ENCODE measurements at regions of chr16 and their contacts with region 1.

Region 1: DNA sequence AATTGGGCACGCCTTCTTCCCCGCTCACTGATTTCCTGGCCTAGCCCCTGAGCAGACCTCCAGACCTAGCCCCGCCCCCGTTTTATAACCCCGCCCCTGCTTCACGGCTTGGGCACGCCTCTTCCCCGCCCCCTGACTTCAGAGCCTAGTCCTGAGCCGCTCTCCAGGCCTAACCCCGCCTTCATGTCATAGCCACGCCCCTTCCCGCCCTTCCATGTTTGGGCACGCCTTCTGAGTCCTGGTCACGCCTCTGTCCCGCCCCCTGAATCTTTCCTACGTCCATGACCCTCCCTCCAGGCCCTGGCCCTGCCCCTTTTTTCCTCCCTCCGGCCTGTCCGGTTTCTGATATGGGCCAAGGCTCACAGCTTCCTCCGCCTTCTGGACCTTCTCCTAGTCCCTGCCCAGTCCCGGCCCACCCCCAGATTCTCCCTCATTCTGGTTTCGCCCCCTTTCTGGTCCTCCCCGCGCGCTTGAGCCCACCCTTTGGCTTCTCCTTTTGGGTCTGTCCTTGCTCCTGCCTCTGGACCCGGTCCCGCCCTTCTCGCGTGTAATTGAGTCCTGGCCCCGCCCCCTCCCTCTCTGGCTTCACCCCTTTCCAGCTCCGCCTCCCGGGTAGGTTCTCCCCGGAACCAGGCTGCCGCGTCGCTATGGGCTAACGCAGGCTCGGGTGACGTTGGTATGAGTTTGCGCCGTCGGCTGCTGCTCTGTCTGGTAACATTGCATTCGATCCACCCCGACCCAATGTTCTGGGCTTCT is 15.1 kb upstream of the EEF2K start:
- DNase-seq: peak; percentile 99 to 100
- H3K4me3 ChIP-seq: peak overlapping the region; percentile 58 to 64
- H3K27ac ChIP-seq: peak overlapping the region; percentile 95 to 98
- H3K4me1 ChIP-seq: peaks cover 9 to 20% of the 10 kb centered on the region in 2 donors
- H3K27me3 ChIP-seq: no peaks in the 10 kb centered on the region
- CTCF ChIP-seq: no peak

Region 2: DNA sequence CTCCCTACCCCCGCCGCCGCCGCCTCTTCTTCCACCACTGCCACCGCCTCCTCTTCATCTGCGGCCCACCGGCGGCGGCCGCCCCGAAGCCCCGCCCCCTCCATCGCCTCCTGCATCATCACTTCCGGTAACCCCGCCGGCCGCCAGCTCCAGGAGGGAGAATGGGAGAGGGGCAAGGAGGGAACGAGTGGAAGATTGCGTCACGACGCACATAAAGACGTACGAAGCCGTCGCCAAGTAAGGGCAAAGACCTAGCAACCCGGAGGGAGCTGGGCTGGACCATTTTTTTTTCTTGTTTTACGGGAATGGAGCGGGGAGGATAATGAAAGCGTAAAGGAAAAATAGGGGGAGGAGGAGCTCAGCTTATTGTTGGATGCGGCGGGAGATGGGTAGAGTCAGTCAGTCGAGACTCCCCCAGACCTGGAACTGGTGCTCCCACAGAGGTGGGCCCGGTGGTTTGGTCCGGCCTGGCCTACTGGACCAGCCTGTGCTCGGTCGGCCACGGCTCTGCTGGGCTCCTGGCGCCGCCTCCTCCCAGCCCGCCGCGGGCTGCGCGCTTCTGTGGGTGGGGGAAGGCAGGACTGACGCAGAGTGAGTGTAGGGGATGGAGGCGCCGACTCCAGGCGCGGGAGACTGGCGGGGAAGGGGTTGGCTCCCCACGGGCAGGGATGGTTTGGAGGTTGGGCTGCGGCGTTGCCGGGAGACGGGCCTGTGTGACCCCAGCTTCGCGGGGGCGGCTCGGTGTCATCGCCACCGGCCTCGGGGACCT is 1290.5 kb before region 1 on chr16 and contains the starts of genes DCUN1D3 and LYRM1:
- intact Hi-C with region 1: loop called (anchors 5 kb)
- DNase-seq: peak; percentile 92 to 99
- H3K4me3 ChIP-seq: peak within 1 kb of the TSS; percentile 80 to 93
- H3K27ac ChIP-seq: peak within 1 kb of the TSS; percentile 96 to 100
- H3K4me1 ChIP-seq: peaks cover 12 to 56% of the 10 kb centered on the region in 2 donors
- H3K27me3 ChIP-seq: no peaks in the 10 kb centered on the region
- CTCF ChIP-seq: no peak
- total RNA-seq, gene DCUN1D3: 9.8 TPM
- total RNA-seq, gene LYRM1: 3.9 TPM

Region 3: DNA sequence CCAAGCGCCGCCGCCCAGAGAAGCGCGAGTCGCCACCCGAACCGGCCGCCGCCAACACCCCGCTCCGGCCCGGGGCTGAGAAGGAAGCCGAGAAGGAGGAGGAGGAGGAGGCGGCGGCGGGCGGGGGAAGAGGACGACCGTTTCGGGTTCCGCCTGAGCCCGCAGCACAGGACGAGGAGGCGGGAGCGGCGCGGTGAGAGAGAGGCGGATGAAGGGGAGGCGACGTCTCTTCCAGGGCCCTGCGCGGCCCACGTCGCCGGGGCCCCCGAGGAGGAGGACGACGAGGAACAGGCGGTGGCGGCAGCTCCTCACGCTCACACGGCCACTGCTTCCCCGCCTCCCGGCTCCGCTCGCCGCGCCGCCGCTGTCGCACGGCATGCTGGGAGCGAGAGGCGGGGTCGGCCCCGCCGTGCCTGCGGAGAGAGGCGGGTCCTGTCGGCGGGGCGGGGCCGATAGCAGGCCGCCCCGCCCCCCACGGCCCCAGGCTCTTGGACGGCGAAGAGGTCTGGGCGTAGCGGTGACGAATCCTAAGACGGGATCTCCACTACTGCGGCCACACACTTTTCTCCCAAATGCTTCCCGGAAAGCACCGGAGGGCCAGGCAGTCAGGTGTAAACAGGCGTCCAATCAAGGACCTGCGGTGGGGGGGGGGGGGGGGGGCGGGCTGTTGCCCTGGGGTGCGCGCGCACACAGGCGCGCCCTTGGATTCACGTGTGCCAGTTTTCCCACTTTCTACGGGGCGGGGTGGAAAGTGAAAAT is 688.9 kb before region 1 on chr16:
- intact Hi-C with region 1: loop called (anchors 10 kb)
- DNase-seq: peak; percentile 75 to 95
- H3K4me3 ChIP-seq: peak overlapping the region; percentile 64 to 90
- H3K27ac ChIP-seq: peak overlapping the region; percentile 93 to 97
- H3K4me1 ChIP-seq: peaks cover 0 to 4% of the 10 kb centered on the region in 2 donors
- H3K27me3 ChIP-seq: no peaks in the 10 kb centered on the region
- CTCF ChIP-seq: no peak

Region 4: GRCh38 chr16:22001591-22001990 is 189.4 kb before region 1 on chr16:
- intact Hi-C with region 1: loop called (anchors 1 kb)
- DNase-seq: no peak
- H3K4me3 ChIP-seq: peak overlapping the region in 1 of 2 donors; percentile 28
- H3K27ac ChIP-seq: no peak overlapping the region
- H3K4me1 ChIP-seq: peaks cover 0 to 5% of the 10 kb centered on the region in 2 donors
- H3K27me3 ChIP-seq: no peaks in the 10 kb centered on the region
- CTCF ChIP-seq: no peak

Region 5: GRCh38 chr16:22161999-22162655 is 28.8 kb before region 1 on chr16 and contains the start of gene SDR42E2:
- intact Hi-C with region 1: no loop called
- DNase-seq: no peak
- H3K4me3 ChIP-seq: peak within 1 kb of the TSS; percentile 16 to 31
- H3K27ac ChIP-seq: no peak within 1 kb of the TSS
- H3K4me1 ChIP-seq: no peaks in the 10 kb centered on the region
- H3K27me3 ChIP-seq: no peaks in the 10 kb centered on the region
- CTCF ChIP-seq: no peak
- total RNA-seq, gene SDR42E2: not detected

Region 6: GRCh38 chr16:22235839-22236745 is 45.1 kb after region 1 on chr16:
- intact Hi-C with region 1: loop called (anchors 5 kb)
- DNase-seq: no peak
- H3K4me3 ChIP-seq: no peak overlapping the region
- H3K27ac ChIP-seq: peak overlapping the region; percentile 22 to 38
- H3K4me1 ChIP-seq: peaks cover 4 to 15% of the 10 kb centered on the region in 2 donors
- H3K27me3 ChIP-seq: no peaks in the 10 kb centered on the region
- CTCF ChIP-seq: no peak

Region 7: DNA sequence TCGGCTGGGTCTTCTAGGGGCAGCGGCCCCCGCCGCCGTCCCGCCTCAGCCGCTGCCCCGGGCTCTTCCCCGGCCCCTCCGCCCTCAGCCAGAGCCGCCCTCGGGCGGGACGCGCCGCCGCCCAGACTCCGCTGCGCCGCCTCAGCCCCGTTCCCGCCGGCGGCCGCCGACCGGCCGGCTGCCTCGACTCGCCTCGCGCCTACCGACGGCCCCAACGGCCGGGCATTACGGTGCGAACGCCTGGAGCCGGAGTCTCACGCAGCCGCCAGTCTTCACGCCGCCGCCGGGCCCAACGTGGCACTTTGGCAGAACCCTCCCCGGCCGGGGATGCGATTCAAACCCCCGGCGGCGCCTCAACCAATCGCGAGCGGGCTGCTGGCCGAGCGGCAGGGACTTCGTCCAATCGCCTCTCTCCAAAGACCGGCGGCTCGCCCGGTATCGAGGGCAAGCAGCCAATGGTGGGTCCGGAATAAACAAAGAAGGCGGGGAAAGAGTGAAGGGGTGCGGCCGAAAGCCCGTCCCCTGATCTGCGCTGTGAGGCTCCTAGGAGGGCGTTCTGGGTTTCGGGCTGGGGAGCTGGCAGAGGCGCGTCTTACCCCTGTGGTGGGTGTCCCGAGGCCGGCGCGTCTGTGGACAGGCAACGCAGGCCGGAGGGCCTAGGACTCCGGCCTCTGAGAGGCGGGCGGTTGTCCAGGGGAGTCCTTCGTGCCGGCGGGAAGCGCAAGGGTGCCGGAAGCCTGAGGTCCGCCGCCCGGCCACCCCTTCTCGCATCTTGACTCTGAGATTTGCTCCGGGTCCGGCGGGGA is 183.6 kb after region 1 on chr16 and contains the start of gene CDR2:
- intact Hi-C with region 1: loop called (anchors 5 kb)
- DNase-seq: peak; percentile 90 to 99
- H3K4me3 ChIP-seq: peak within 1 kb of the TSS; percentile 97 to 98
- H3K27ac ChIP-seq: peak within 1 kb of the TSS; percentile 92 to 93
- H3K4me1 ChIP-seq: peaks cover 11 to 12% of the 10 kb centered on the region in 2 donors
- H3K27me3 ChIP-seq: no peaks in the 10 kb centered on the region
- CTCF ChIP-seq: no peak
- total RNA-seq, gene CDR2: 36.3 TPM

Region 8: GRCh38 chr16:23149349-23149996 is 958.5 kb after region 1 on chr16 and contains the start of gene USP31:
- intact Hi-C with region 1: loop called (anchors 10 kb)
- DNase-seq: peak; percentile 82 to 97
- H3K4me3 ChIP-seq: peak within 1 kb of the TSS; percentile 76 to 88
- H3K27ac ChIP-seq: peak within 1 kb of the TSS; percentile 75 to 83
- H3K4me1 ChIP-seq: peaks cover 3 to 31% of the 10 kb centered on the region in 2 donors
- H3K27me3 ChIP-seq: no peaks in the 10 kb centered on the region
- CTCF ChIP-seq: no peak
- total RNA-seq, gene USP31: 6.2 TPM